ENCODE measurements at regions of chr7 and their contacts with region 1.

Region 1: DNA sequence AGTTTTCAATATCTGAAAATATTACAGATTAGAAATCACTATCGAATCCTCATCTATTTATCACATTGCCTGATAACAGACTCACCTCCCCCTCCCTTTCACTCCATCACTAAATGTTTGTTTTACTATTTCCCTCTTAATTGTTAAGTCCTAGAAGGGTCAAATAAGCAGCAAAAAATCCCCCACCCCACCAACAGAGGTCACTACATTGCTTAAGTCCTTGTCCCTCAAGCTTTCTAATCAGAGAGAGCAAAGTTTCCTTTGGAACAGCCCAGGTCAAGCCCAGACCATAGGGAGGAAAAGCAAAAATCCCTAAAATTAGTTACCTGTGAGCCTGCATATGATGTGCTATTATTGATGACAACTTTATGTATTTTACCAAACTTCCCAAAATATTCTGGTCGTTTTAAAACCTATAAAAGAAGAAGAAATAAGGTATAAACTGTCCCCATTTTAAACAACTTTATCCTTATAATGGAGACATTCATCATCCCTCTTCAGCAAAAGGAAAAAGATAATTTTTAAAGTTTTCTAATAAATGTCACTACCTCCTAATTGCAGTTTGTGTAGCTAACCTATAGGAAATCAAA is 95.0 kb downstream of the CNOT4 start:
- DNase-seq: peak; percentile 64
- ATAC-seq: peak; percentile 77
- H3K4me3 ChIP-seq: no peak overlapping the region
- H3K27ac ChIP-seq: no peak overlapping the region
- H3K4me1 ChIP-seq: no peaks in the 10 kb centered on the region
- H3K27me3 ChIP-seq: no peaks in the 10 kb centered on the region
- CTCF ChIP-seq: peak; percentile 50
- POLR2A ChIP-seq: no peak
- RAD21 ChIP-seq: peak; percentile 36; the same call in 1 of the 2 replicates

Region 2: DNA sequence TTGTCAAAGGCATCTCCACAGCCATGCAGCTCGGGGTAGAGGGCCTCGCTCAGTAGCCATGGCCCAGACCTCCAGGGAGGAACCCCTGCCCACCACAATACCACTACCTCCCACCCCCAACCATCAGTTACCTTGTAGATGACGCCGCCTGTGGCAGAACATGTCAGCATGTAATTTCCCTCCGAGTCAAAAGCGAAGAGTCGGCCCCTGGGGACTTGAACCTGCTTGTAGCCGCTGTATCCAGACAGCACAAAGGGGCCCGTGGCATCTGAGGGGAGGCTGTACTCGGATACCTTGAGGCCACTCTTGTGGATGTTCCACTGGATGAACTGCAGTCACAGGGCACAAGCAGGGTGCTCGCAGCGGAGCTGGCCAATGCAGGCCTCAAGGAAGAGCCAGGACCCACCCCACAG is 228.1 kb before region 1 on chr7:
- CTCF ChIA-PET with region 1: no interaction called
- POLR2A ChIA-PET with region 1: no interaction called
- dilution Hi-C with region 1: no loop called
- in situ Hi-C with region 1: no loop called
- intact Hi-C with region 1: no loop called
- DNase-seq: no peak
- ATAC-seq: no peak
- H3K4me3 ChIP-seq: no peak overlapping the region
- H3K27ac ChIP-seq: no peak overlapping the region
- H3K4me1 ChIP-seq: no peaks in the 10 kb centered on the region
- H3K27me3 ChIP-seq: no peaks in the 10 kb centered on the region
- CTCF ChIP-seq: no peak
- POLR2A ChIP-seq: no peak
- RAD21 ChIP-seq: no peak

Region 3: DNA sequence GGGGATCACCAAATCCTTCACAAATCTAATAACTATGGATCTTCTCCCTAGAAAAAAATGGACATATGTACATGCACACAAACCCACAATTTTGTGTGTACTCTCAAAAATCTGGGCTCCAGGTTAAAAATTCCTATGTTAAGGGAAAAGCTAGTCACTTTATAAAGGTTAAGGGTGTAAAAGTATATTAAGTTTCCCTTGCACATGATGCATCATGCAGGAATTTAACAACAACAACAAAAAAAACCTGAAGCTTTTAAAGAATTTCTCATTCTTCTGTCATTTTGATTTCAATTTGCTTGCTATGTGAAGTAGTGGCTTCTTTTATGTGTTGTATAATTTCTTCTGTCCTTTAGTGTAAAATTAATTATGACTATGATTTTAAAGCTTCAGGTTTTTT is 28.8 kb before region 1 on chr7:
- CTCF ChIA-PET with region 1: no interaction called
- POLR2A ChIA-PET with region 1: no interaction called
- dilution Hi-C with region 1: no loop called
- in situ Hi-C with region 1: no loop called
- intact Hi-C with region 1: loop called (anchors 1 kb)
- DNase-seq: peak; percentile 17
- ATAC-seq: no peak
- H3K4me3 ChIP-seq: no peak overlapping the region
- H3K27ac ChIP-seq: no peak overlapping the region
- H3K4me1 ChIP-seq: peaks cover 4% of the 10 kb centered on the region; the same call in 1 of the 2 replicates
- H3K27me3 ChIP-seq: no peaks in the 10 kb centered on the region
- CTCF ChIP-seq: no peak
- POLR2A ChIP-seq: no peak
- RAD21 ChIP-seq: no peak

Region 4: DNA sequence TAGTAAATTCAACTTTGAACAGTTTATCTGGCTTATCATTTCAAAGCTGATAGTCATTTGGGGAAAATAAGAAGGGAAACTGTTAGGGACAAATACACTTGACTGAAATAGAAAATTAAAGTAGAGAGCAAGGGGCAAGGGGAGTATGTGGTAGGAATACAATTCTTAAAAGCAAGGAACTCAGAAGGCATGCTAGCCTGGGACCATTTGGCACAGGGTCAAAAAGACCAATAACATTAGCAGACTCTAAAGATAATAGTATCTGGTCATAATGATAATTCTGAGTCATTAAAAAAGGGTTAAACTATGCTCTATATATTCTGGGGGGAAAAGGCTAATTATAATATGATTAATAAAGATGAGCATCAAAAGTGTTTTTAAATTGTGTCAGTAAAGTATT is 17.3 kb before region 1 on chr7:
- CTCF ChIA-PET with region 1: no interaction called
- POLR2A ChIA-PET with region 1: no interaction called
- dilution Hi-C with region 1: no loop called
- in situ Hi-C with region 1: no loop called
- intact Hi-C with region 1: no loop called
- DNase-seq: no peak
- ATAC-seq: no peak
- H3K4me3 ChIP-seq: no peak overlapping the region
- H3K27ac ChIP-seq: no peak overlapping the region
- H3K4me1 ChIP-seq: no peaks in the 10 kb centered on the region
- H3K27me3 ChIP-seq: no peaks in the 10 kb centered on the region
- CTCF ChIP-seq: no peak
- POLR2A ChIP-seq: no peak
- RAD21 ChIP-seq: no peak

Region 5: GRCh38 chr7:135434047-135434446 is 19.1 kb after region 1 on chr7:
- CTCF ChIA-PET with region 1: interaction called, 3 read pairs
- POLR2A ChIA-PET with region 1: no interaction called
- dilution Hi-C with region 1: no loop called
- in situ Hi-C with region 1: no loop called
- intact Hi-C with region 1: loop called (anchors 2 kb)
- DNase-seq: no peak
- ATAC-seq: no peak
- H3K4me3 ChIP-seq: no peak overlapping the region
- H3K27ac ChIP-seq: no peak overlapping the region
- H3K4me1 ChIP-seq: no peaks in the 10 kb centered on the region
- H3K27me3 ChIP-seq: no peaks in the 10 kb centered on the region
- CTCF ChIP-seq: no peak
- POLR2A ChIP-seq: no peak
- RAD21 ChIP-seq: no peak

Region 6: GRCh38 chr7:135509903-135510602 is 95.1 kb after region 1 on chr7 and contains the start of gene CNOT4:
- CTCF ChIA-PET with region 1: no interaction called
- POLR2A ChIA-PET with region 1: no interaction called
- dilution Hi-C with region 1: no loop called
- in situ Hi-C with region 1: no loop called
- intact Hi-C with region 1: loop called (anchors 2 kb)
- DNase-seq: peak; percentile 92
- ATAC-seq: peak; percentile 97
- H3K4me3 ChIP-seq: peak within 1 kb of the TSS; percentile 92
- H3K27ac ChIP-seq: peak within 1 kb of the TSS; percentile 96
- H3K4me1 ChIP-seq: no peaks in the 10 kb centered on the region
- H3K27me3 ChIP-seq: no peaks in the 10 kb centered on the region
- CTCF ChIP-seq: no peak
- POLR2A ChIP-seq: peak; percentile 93
- RAD21 ChIP-seq: no peak
- total RNA-seq, gene CNOT4: 8.1 and 10.0 TPM in 2 replicates

Measured in IMR-90 (cell line).